Breast epithelium (tissue), 4 donors: ENCODE measurements at regions of chr4 and their contacts with region 1.

Region 1: DNA sequence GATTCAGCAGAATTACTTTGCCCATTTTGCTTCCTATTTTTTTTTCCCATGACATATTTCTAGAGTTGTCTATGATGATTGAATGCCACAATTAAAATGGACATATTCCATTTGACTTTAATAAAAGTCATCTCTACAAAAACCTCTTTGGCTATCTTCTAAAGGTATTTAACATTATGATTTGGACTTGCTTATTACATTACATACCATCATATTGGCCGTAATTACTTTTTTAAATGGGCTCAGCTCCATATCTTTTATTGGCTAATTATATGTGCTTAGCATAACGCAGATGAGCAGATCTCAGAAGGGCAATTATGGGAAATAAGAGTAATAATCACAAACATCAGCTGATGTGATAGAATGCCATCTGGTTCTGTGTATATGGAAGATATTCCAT is 4.5 kb upstream of the LNX1 start:
- DNase-seq: no peak
- H3K4me3 ChIP-seq: no peak overlapping the region
- H3K27ac ChIP-seq: no peak overlapping the region
- H3K4me1 ChIP-seq: peaks cover 0 to 2% of the 10 kb centered on the region in 2 donors
- H3K27me3 ChIP-seq: no peaks in the 10 kb centered on the region
- CTCF ChIP-seq: no peak
- POLR2A ChIP-seq: no peak

Region 2: DNA sequence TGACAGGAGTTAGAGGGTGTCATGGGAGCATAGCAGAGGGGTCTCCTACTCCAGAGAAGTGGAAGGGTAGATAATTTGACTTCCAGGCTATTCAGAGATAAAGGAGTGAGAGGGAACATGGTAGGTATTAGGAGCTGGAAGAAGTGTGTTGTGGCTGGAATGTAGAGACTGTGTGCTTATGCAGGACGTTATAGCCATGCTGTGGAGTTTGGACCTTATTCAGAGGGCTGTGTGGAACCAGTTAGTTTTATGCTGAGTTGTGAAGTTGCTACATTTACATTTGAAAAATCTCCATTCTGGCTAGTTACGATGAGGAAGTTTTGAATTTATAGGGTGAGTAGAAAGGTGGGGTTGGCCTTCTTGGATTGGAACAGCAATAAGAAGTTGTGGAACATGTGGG is 150.9 kb before region 1 on chr4:
- intact Hi-C with region 1: no loop called
- DNase-seq: no peak
- H3K4me3 ChIP-seq: no peak overlapping the region
- H3K27ac ChIP-seq: no peak overlapping the region
- H3K4me1 ChIP-seq: no peaks in the 10 kb centered on the region
- H3K27me3 ChIP-seq: no peaks in the 10 kb centered on the region
- CTCF ChIP-seq: no peak
- POLR2A ChIP-seq: no peak

Region 3: DNA sequence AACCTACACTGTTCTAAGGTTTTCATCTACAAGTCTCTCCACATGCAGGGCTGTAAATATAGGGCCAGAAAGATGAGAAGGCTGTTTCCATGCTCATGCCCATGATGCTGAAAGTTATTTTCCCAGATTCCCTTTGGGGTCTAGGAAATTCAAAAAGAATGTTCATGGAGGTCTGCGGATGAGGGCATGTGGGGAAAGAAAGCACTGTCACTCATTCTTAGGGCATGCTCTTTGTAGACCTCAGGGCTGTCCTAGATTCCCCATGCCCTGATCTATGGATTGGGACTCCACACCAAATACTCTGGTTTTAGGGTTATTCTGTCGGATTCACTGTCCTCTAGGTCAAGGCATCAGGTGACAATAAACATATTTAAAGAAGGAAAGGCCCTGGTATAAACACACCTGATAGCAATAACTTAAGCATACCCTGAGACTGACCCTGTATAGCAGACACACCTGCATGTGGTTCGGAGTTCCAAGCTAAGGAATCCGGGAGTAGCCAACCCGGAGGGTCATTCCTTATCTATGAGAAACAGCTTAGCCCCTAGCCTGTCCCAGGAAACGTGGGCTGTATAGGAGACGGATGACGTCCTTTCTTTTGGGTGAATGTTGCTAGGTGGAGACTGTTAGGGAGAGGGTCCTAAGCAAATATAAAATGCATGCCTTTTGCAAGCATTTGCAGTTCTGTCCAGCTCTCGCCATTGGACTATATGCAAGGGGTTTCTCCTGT is 42.2 kb before region 1 on chr4:
- intact Hi-C with region 1: loop called (anchors 2 kb)
- DNase-seq: no peak
- H3K4me3 ChIP-seq: no peak overlapping the region
- H3K27ac ChIP-seq: no peak overlapping the region
- H3K4me1 ChIP-seq: peaks cover 0 to 4% of the 10 kb centered on the region in 2 donors
- H3K27me3 ChIP-seq: no peaks in the 10 kb centered on the region
- CTCF ChIP-seq: no peak
- POLR2A ChIP-seq: no peak